ENCODE measurements at regions of chr5 and their contacts with region 1.

Region 1: DNA sequence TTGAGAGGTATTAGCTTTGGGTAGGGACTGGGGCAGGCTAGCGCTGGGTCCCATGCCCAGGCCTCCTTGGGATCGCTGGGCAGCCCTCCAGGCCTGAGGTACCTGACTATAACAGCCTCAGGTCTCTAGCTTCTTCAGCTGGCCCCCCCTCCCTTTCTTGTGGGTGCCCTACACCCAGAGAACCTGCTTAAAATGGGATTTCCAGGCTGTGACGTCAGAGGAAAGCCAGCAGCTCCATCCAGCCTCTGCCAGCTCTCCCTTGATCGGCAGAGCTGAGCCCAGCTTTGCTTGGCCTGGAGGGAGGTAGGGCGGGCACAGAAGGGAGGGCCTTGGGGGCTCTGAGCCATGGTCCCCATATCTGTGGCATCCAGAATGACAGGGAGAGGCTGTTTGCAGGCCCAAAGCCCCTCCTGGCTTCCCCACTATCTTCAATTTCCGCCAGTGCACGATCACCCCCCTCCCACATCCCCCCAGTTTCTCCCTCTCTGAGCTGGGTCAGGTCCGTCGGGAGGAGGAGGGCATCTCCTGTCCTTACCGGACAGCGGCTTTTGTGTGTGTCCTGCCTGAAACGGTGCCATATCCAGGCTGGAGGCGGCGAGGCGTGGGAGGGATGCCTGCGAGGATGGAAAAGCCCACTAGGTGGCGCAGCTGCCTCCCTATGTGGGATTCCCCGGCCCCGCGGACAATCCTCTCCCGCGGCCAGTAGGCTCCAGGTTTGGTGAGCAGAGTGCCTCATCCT is 10.8 kb downstream of the REEP2 start:
- DNase-seq: peak; percentile 95
- H3K4me3 Mint-ChIP-seq: no peak overlapping the region
- H3K27ac Mint-ChIP-seq: no peak overlapping the region
- H3K4me1 Mint-ChIP-seq: peaks cover 7% of the 10 kb centered on the region
- H3K27me3 Mint-ChIP-seq: no peaks in the 10 kb centered on the region
- CTCF ChIP-seq: peak; percentile 98

Region 2: GRCh38 chr5:138418444-138418843 is 31.2 kb before region 1 on chr5:
- CTCF ChIA-PET with region 1: interaction called, 21 read pairs
- POLR2A ChIA-PET with region 1: no interaction called
- intact Hi-C with region 1: no loop called
- DNase-seq: no peak
- H3K4me3 Mint-ChIP-seq: no peak overlapping the region
- H3K27ac Mint-ChIP-seq: no peak overlapping the region
- H3K4me1 Mint-ChIP-seq: peaks cover 6% of the 10 kb centered on the region
- H3K27me3 Mint-ChIP-seq: no peaks in the 10 kb centered on the region
- CTCF ChIP-seq: no peak

Region 3: GRCh38 chr5:138438724-138439476 is 10.8 kb before region 1 on chr5 and contains the start of gene REEP2:
- CTCF ChIA-PET with region 1: interaction called, 64 read pairs
- POLR2A ChIA-PET with region 1: no interaction called
- intact Hi-C with region 1: no loop called
- DNase-seq: peak; percentile 51
- H3K4me3 Mint-ChIP-seq: peak within 1 kb of the TSS; percentile 69
- H3K27ac Mint-ChIP-seq: peak within 1 kb of the TSS; percentile 85
- H3K4me1 Mint-ChIP-seq: peaks cover 19% of the 10 kb centered on the region
- H3K27me3 Mint-ChIP-seq: no peaks in the 10 kb centered on the region
- CTCF ChIP-seq: no peak
- total RNA-seq, gene REEP2: 0.77 and 0.81 TPM in 2 replicates

Region 4: DNA sequence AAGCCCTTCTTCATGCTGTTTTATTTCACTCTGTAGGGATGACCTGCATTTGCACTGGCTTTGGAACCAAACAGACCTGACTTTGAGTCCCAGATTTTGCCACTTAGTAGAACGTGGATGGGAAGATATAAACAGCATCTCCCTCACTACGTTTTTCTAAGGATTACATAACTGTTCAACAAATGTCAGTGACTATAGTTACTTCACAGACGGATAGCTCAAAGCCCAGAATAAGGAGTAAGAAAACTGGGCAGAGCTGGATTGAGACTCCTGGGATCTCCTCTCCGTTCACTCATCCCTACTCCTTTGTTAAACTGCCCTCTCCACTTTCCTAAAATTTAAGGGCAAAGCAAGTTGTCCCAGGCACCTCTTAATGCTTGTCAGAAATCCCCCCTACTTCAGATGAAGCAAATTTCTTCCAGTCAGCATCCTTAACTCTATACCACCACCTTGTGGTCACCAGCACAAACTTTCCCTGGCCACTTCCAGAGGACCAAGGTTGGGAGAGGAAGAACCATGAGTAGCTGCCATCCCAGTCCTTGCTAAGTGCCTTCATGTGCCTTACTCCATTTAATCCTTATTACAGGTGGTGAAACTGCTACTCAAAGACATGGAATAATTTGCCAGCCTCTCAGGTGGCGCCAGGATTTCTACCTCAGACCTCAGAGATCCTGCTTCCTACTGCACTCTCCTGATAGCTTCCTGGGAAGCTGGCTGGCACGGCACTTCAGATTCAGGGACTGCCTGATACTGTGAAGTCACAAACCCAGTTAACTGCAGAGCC is 54.0 kb after region 1 on chr5:
- CTCF ChIA-PET with region 1: interaction called, 278 read pairs
- POLR2A ChIA-PET with region 1: interaction called, 25 read pairs
- intact Hi-C with region 1: loop called (anchors 1 kb)
- DNase-seq: peak; percentile 86
- H3K4me3 Mint-ChIP-seq: no peak overlapping the region
- H3K27ac Mint-ChIP-seq: no peak overlapping the region
- H3K4me1 Mint-ChIP-seq: peaks cover 58% of the 10 kb centered on the region
- H3K27me3 Mint-ChIP-seq: no peaks in the 10 kb centered on the region
- CTCF ChIP-seq: peak; percentile 79

Region 5: GRCh38 chr5:138528208-138528607 is 78.5 kb after region 1 on chr5:
- CTCF ChIA-PET with region 1: interaction called, 36 read pairs
- POLR2A ChIA-PET with region 1: interaction called, 10 read pairs
- intact Hi-C with region 1: no loop called
- DNase-seq: peak; percentile 41
- H3K4me3 Mint-ChIP-seq: peak overlapping the region; percentile 1
- H3K27ac Mint-ChIP-seq: no peak overlapping the region
- H3K4me1 Mint-ChIP-seq: peaks cover 49% of the 10 kb centered on the region
- H3K27me3 Mint-ChIP-seq: no peaks in the 10 kb centered on the region
- CTCF ChIP-seq: no peak